Right ventricle myocardium inferior (tissue), 1 donor: ENCODE measurements at regions of chr16 and their contacts with region 1.

Region 1: GRCh38 chr16:87043231-87044031 is 273.8 kb downstream of the C16orf95 start:
- DNase-seq: no peak
- ATAC-seq: peak; percentile 72

Region 2: GRCh38 chr16:86931399-86931941 is 112.0 kb before region 1 on chr16:
- intact Hi-C with region 1: loop called (anchors 5 kb)
- DNase-seq: peak; percentile 78
- ATAC-seq: peak; percentile 81